Posterior vena cava (tissue), 2 donors: ENCODE measurements at regions of chr6 and their contacts with region 1.

Region 1: DNA sequence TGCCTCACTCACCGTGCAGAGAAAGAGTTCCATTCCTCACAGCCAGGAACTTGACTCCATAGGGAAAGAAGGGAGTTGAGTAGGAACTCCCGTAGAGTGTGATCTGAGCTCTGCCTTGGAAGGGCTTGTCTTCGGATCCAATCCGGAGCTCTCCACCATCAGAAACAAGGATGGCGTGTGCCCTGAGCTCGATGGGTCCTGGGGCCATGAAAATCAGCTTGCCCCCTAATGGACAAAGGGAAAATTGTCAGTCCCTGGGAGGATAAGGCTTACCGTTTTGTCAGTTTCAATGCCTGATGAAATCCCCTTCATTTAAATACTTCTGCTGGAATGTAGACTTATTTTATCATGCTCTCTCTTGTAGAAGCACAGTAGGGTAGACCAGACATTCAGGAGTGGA is 153.3 kb downstream of the PKHD1 start:
- DNase-seq: no peak

Region 2: GRCh38 chr6:51505434-51505833 is 428.7 kb before region 1 on chr6:
- intact Hi-C with region 1: loop called in 1 of 2 experiments (anchors 10 kb)
- DNase-seq: no peak

Region 3: GRCh38 chr6:52125139-52125538 is 191.0 kb after region 1 on chr6:
- intact Hi-C with region 1: no loop called
- DNase-seq: no peak